GM18951 (cell line): ENCODE measurements at regions of chr1 and their contacts with region 1.

Region 1: GRCh38 chr1:1489861-1490260 is 18.3 kb downstream of the ATAD3B start:
- POLR2A ChIP-seq: no peak

Region 2: GRCh38 chr1:1449099-1449739 is 40.6 kb before region 1 on chr1 and contains the start of gene ATAD3C:
- in situ Hi-C with region 1: loop called (anchors 5 kb)
- POLR2A ChIP-seq: no peak